Natural killer cell (primary cell): ENCODE measurements at regions of chr19 and their contacts with region 1.

Region 1: GRCh38 chr19:51904331-51905165 is at the start of gene ZNF649:
- DNase-seq: peak; percentile 76 to 88
- ATAC-seq: peak; percentile 92 to 96 (median 94)
- H3K4me3 ChIP-seq: peak within 1 kb of the TSS; percentile 68
- H3K4me3 Mint-ChIP-seq: peak within 1 kb of the TSS; percentile 100
- H3K27ac ChIP-seq: peak within 1 kb of the TSS; percentile 76
- H3K27ac Mint-ChIP-seq: peak within 1 kb of the TSS; percentile 96 to 97
- H3K4me1 ChIP-seq: peaks cover 15% of the 10 kb centered on the region
- H3K4me1 Mint-ChIP-seq: peaks cover 34 to 35% of the 10 kb centered on the region in 2 donors
- H3K27me3 ChIP-seq: peaks cover 4% of the 10 kb centered on the region
- H3K27me3 Mint-ChIP-seq: peaks cover 13 to 18% of the 10 kb centered on the region in 2 donors
- CTCF ChIP-seq: no peak
- total RNA-seq, gene ZNF649: 11.0 to 16.1 (median 12.3) TPM

Region 2: GRCh38 chr19:51354742-51355148 is 549.8 kb before region 1 on chr19:
- intact Hi-C with region 1: no loop called
- DNase-seq: peak in 1 of 2 donors; percentile 75
- ATAC-seq: no peak
- H3K4me3 ChIP-seq: no peak overlapping the region
- H3K4me3 Mint-ChIP-seq: no peak overlapping the region
- H3K27ac ChIP-seq: no peak overlapping the region
- H3K27ac Mint-ChIP-seq: no peak overlapping the region
- H3K4me1 ChIP-seq: no peaks in the 10 kb centered on the region
- H3K4me1 Mint-ChIP-seq: peaks cover 0 to 4% of the 10 kb centered on the region in 2 donors
- H3K27me3 ChIP-seq: no peaks in the 10 kb centered on the region
- H3K27me3 Mint-ChIP-seq: no peaks in the 10 kb centered on the region
- CTCF ChIP-seq: no peak

Region 3: GRCh38 chr19:51887522-51888498 is 16.7 kb before region 1 on chr19 and contains the start of gene ZNF577:
- intact Hi-C with region 1: loop called (anchors 2 kb)
- DNase-seq: peak; percentile 73 to 74
- ATAC-seq: peak; percentile 85 to 97 (median 96)
- H3K4me3 ChIP-seq: peak within 1 kb of the TSS; percentile 54
- H3K4me3 Mint-ChIP-seq: peak within 1 kb of the TSS; percentile 100
- H3K27ac ChIP-seq: peak within 1 kb of the TSS; percentile 50
- H3K27ac Mint-ChIP-seq: peak within 1 kb of the TSS; percentile 96 to 97
- H3K4me1 ChIP-seq: peaks cover 3% of the 10 kb centered on the region
- H3K4me1 Mint-ChIP-seq: peaks cover 13 to 19% of the 10 kb centered on the region in 2 donors
- H3K27me3 ChIP-seq: no peaks in the 10 kb centered on the region
- H3K27me3 Mint-ChIP-seq: no peaks in the 10 kb centered on the region
- CTCF ChIP-seq: no peak
- total RNA-seq, gene ZNF577: 8.5 to 15.6 (median 12.4) TPM

Region 4: DNA sequence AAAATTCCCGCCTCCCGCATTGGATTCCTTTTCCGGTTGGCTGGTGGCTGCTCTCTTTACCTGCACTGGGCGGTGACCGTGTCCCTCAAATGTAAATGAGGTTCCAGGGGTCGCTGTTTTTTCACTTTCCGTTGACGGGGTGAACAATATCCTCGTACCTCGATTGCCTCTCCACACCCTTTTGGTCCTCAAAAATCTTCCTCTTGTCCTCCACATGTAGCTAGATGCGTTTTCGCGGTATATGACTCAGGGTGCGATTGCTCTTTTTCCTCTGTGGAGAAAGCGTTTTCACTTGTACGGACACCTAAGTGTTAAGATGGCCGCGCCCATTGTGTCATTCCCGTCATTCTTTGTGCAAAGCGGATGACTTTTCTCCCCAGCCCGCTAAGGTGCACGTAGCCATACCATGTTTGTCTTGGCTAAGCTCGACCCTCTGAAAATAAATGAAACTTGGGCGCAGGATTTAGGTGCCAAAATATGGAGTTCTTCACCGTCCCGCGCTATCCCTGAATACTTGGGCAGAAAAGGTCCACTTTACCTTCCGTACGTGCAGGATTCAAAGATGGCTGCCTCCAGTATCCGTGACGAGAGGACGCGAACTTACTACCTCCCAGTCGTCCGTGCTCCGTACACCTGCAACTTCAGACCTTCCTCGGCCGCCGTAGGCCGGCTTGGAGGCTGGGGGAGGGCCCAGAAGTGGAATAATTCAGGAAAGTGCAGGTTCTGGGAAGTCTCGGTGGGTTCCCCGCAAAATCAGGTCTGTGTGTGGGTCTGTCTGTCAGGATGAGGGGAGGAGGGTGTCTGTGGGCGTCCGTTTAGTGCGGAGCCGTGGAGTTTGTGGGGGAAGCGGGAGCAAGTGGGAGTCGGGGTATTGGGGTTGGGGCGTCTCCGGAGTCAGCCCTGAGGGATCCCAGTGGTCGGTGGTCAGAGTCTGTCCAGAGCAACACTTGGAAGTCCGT is 22.5 kb after region 1 on chr19 and contains the start of gene ZNF613:
- intact Hi-C with region 1: loop called (anchors 1 kb)
- DNase-seq: peak; percentile 76 to 91
- ATAC-seq: peak; percentile 84 to 89 (median 86)
- H3K4me3 ChIP-seq: peak within 1 kb of the TSS; percentile 78
- H3K4me3 Mint-ChIP-seq: peak within 1 kb of the TSS; percentile 96
- H3K27ac ChIP-seq: peak within 1 kb of the TSS; percentile 67
- H3K27ac Mint-ChIP-seq: peak within 1 kb of the TSS; percentile 86 to 98
- H3K4me1 ChIP-seq: peaks cover 16% of the 10 kb centered on the region
- H3K4me1 Mint-ChIP-seq: peaks cover 34 to 36% of the 10 kb centered on the region in 2 donors
- H3K27me3 ChIP-seq: no peaks in the 10 kb centered on the region
- H3K27me3 Mint-ChIP-seq: no peaks in the 10 kb centered on the region
- CTCF ChIP-seq: peak; percentile 24
- total RNA-seq, gene ZNF613: 1.8 to 3.9 (median 2.5) TPM

Region 5: DNA sequence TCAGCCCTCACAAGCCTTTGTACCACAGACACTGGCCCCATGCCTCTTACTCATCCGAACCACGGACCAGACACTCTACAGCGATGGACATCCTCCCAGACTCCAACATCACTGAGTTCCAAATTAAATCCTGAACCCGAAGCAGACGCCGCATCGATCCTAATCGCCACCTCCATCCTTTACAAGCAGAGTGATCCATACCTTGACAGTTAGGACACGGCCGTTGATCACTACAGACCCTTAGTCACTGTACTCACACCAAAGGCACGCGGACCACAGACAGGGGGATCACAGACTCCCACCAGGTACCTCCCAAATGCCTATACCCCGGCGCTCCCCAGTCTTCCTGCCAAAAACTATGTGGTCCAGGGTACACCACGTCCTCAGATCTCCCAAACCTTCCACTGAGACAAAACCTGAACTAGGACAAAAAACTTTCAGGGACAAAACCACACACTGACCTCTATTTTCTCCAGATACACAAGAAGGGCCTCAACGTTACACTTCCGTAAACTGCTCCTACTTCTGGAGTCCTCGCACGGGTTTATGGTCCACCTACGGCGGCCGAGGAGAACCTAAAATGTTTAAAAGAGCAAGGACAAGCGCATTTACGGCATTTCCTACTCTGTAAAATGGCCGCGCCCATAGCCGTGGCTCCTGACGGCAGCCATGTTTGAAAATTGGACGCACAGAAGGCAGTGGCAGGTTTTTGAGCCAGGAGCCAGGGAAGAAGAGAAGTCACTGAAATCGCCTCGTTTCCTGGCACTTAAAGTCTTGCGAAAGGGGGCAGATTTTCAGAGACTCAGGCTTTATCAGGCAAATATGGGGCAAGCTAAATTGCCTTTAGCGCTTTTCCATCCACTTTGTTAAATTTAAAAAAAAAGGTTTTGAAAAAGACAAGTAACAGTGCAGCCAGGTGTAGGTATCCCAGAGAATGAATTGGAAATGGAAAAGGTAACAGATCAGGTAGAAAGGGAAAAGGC is 82.1 kb after region 1 on chr19 and contains the start of gene ZNF350:
- intact Hi-C with region 1: loop called (anchors 1 kb)
- DNase-seq: peak; percentile 86 to 95
- ATAC-seq: peak; percentile 98 to 100 (median 98)
- H3K4me3 ChIP-seq: peak within 1 kb of the TSS; percentile 83
- H3K4me3 Mint-ChIP-seq: peak within 1 kb of the TSS; percentile 96
- H3K27ac ChIP-seq: peak within 1 kb of the TSS; percentile 68
- H3K27ac Mint-ChIP-seq: peak within 1 kb of the TSS; percentile 90 to 96
- H3K4me1 ChIP-seq: peaks cover 15% of the 10 kb centered on the region
- H3K4me1 Mint-ChIP-seq: peaks cover 12 to 13% of the 10 kb centered on the region in 2 donors
- H3K27me3 ChIP-seq: no peaks in the 10 kb centered on the region
- H3K27me3 Mint-ChIP-seq: no peaks in the 10 kb centered on the region
- CTCF ChIP-seq: no peak
- total RNA-seq, gene ZNF350: 32.3 to 46.9 (median 36.6) TPM